Posterior cingulate gyrus (tissue), 11 donors: ENCODE measurements at regions of chr16 and their contacts with region 1.

Region 1: DNA sequence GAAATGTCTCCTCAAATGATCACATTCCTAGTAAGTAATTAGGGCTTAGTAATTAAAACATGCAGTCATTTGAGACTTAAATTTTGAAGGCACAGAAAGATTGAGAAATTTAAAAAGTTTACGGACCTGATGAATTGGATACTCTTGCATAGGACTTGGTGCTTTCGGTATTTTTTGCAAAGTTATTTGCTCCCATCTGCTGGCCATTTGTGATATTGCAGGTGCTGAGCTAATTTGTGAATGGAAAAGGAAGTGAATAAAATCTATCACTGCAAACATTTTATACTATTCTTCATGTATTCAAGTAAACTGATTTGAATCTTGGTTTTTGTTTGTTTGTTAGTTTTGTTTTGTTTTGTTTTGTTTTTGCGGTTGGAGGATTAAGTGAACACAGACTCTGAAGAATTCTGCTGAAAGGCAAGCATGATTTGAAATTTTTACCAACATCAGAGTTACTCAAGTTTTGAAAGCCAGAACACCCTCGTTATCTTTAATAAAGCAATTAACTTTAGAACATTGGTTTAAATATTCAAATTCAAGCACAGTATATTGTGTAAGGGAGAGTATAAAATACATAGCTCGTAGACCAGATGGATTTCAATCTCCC is 689.5 kb upstream of the RBFOX1 start:
- DNase-seq: peak in 4 of 10 donors; percentile 56 to 75 (median 68)

Region 2: DNA sequence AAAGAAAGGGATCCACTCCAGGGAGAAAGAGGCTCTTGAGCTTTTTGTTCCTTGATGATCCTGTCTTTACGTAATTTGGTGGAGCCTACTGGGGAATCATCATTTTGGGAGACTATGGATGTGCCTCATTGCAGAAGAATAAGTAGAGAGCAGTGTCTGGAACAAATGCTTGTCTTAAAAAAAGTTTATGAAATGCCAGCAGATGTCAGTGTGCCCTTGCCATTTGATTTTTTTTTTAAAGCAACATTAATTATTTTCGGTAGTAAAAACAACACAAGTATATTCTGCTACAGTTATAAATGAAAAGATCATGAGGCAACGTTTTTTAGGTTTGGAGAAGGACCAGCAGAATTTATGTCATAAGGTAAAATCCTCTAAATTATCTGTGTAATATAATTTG is 610.7 kb before region 1 on chr16:
- intact Hi-C with region 1: loop called (anchors 10 kb)
- DNase-seq: no peak

Region 3: DNA sequence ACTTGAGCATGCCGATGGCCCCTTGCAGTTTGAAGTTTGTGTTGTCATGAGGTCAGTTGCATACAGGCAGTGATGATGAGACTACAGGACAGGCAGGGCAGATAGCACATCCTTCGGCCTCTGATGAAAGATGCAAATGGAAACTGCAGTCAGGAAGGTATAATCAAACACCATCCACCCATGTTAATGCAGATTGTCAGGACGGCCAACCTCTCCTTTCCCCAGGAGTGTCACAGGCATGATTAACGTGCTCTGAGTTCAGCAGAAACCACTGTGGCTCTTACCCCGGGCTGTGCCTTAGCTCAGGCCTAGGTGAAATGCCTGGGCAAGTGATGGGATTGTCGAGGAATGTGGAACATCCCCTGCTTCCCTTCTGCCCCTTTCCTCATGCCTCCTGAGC is 204.1 kb before region 1 on chr16:
- intact Hi-C with region 1: no loop called
- DNase-seq: no peak